A549 (cell line): ENCODE measurements at regions of chr1 and their contacts with region 1.

Region 1: DNA sequence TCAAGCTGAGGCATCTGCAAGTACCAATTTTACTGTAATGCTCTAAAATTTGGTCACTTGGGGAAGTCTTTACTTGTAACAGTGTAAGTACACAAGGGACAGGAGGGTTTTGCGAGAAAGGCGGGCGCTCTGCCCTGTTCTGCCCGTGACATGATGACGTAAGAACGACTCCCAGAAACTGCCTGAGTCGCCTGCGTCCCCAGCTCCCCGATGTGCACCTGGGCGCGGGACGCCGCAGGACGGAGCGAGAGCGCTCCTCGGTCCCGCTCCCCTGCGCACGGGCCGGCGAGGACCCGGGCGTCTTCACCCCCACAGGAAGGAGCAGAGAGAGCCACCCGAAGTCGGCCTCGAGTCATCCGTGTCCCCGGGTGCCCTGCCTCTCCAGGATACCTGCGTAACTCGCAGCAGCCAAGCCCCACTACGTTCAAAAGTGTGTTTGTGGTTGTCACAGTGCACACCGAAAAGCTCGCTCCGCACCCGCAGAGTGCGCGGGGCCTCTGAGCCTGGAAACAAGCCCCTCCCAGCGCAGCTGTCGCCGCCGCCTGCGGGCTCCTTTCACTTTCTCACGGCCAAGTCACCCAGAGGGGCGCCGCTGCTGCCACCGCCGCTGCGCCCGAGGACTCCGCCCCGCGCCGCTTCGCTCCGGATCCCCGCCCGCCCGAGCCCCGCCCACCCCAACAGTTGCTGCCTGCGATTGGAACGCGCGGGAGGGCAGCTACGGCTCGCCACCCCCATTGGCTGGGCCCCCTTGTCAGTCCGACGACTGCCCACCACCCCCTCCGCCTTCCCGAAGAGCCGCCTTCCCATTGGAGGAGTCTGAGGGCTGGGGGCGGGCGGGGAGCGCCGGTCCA is 3.2 kb upstream of the ZBTB18 start:
- DNase-seq: peak; percentile 96 to 99
- ATAC-seq: peak; percentile 93 to 98
- H3K4me3 ChIP-seq: peak overlapping the region; percentile 79
- H3K27ac ChIP-seq: peak overlapping the region; percentile 86 to 93
- H3K4me1 ChIP-seq: peaks cover 30% of the 10 kb centered on the region
- CTCF ChIP-seq: no peak
- EP300 ChIP-seq: no peak
- POLR2A ChIP-seq: peak; percentile 69
- RAD21 ChIP-seq: no peak; a peak in 3 of 5 replicates

Region 2: DNA sequence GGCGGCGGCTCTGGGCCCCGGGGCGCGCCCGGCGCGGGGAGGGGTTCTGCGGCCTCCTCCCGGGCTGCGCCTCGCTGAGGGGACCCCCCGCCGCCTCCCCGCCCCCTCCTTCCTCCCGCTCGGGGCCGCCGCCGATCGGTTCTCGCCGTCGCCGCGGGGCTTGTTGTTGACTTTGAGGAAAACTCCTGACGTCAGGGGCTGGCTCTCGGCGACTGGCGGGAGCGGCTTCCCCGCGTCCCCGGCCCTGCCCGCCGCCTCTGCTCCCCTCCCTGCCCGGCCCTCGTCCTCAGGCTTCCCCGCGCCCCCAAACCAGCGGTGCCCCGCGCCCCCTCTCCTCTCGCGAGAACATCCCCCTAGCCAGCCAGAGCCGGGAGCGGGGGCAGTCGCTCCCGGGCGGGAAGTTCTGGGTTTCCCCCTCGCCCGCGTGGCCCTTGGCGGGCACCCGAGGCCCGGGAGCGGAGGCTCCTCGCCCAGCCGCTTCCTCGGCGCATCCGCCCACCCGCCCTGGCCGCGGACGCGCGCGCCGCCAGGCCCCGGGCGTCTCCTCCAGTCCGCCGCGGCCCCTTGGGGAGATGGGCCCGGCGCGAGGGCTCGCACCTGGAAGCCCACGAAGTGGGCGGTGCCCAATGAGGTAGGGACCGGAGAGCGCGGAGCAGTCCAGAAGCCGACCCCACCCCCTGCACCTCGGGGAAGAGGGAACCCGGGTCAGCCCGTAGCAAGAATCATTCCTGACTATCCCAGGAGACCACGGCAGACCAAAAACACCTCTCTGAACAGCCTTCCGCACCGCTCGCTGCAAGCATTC is 197.2 kb before region 1 on chr1:
- CTCF ChIA-PET with region 1: no interaction called
- POLR2A ChIA-PET with region 1: interaction called, 10 read pairs
- DNase-seq: peak; percentile 72 to 91
- ATAC-seq: peak; percentile 74 to 79
- H3K4me3 ChIP-seq: peak overlapping the region; percentile 75
- H3K27ac ChIP-seq: peak overlapping the region; percentile 94 to 99
- H3K4me1 ChIP-seq: peaks cover 35% of the 10 kb centered on the region
- CTCF ChIP-seq: no peak
- EP300 ChIP-seq: no peak
- POLR2A ChIP-seq: peak; percentile 18
- RAD21 ChIP-seq: 0 out of 5 replicates have a peak, but pooled peaks of 1 of the 2 experiments have one; percentile 24

Region 3: DNA sequence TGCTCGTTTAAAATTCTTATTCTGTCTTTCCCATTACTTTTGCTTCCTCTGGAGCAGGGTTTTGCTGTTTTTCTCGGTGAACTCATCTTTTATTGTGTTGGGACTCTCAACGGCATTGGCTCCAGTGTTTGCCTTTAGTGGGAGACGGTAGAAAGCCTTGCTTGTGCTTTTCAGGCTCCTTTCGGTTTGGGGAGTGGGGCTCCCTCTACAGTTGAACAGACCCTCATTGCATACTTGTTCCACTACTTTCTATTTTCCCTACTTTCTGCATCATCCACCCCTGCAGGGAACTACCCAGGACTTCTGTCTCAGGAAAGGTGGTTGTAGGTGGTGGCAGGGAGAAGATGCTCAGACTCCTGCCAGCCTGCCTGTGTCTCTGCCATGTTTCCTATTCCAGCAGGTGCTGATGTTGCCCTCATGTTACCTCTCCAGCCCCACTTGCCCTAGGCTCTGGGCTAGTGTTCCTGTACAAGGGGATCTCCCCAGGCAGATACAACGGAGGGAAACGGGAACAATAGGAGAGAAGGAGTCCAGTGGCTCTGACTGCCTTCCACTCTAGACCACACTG is 65.3 kb before region 1 on chr1:
- CTCF ChIA-PET with region 1: no interaction called
- POLR2A ChIA-PET with region 1: no interaction called
- DNase-seq: no peak
- ATAC-seq: peak in 1 of 2 experiments; percentile 60; a peak in 3 of 6 replicates
- H3K4me3 ChIP-seq: no peak overlapping the region
- H3K27ac ChIP-seq: no peak overlapping the region
- H3K4me1 ChIP-seq: no peaks in the 10 kb centered on the region
- CTCF ChIP-seq: no peak
- EP300 ChIP-seq: no peak
- POLR2A ChIP-seq: no peak
- RAD21 ChIP-seq: peak in 1 of 2 experiments; percentile 19; a peak in 2 of 5 replicates